Esophagus muscularis mucosa (tissue), 4 donors: ENCODE measurements at regions of chr4 and their contacts with region 1.

Region 1: DNA sequence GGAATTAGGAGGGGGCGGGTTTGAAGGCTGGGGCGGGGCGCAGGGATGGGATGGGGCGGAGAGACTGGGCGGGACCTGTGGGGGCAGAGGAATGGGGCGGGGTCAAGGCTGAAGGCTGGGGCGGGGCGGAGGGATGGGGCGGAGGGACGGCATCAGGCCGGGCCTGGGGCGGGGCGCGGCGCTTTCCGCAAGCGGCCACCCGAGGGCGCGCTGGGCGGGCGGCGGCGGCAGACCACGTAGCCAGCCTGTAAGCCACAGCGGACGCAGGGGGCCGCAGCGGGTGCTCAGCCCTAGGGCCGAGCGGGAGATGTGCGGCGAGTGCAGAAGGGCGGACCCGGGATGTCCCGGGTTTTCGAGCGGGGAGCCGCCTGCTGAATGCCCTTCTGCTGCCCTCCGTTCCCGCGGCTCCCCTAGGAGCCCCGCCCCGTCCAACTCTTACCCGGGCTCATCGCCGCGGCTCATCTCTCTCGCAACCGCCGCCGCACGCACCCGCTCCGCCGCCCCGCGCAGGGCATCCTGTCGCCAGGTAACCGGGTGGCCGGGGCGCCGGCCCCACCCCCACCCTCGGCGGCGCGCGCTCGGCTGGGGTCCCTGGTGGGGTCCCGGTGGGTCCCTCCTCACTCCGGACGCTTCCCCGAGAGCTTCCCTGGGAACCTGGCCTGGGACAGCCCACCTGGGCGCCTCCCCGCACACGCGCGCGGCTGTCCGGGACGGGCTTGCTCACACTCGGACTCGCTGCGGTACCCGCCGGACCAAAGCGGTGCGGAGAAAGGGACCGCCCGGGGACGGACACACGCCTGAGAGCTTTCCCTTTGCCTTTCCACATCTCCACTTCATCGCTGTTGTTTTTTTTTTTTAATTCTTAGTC is at the start of gene CCDC110:
- DNase-seq: peak; percentile 97
- H3K4me3 ChIP-seq: peak within 1 kb of the TSS; percentile 76 to 97 (median 91)
- H3K27ac ChIP-seq: peak within 1 kb of the TSS; percentile 84 to 86 (median 84)
- H3K4me1 ChIP-seq: peaks cover 9 to 20% (median 18%) of the 10 kb centered on the region in 4 donors
- H3K27me3 ChIP-seq: peaks cover 0 to 4% (median 0%) of the 10 kb centered on the region in 4 donors
- CTCF ChIP-seq: peak; percentile 75 to 86 (median 78)
- EP300 ChIP-seq: no peak
- POLR2A ChIP-seq: no peak
- total RNA-seq, gene CCDC110: 2.9 to 6.3 (median 4.4) TPM

Region 2: DNA sequence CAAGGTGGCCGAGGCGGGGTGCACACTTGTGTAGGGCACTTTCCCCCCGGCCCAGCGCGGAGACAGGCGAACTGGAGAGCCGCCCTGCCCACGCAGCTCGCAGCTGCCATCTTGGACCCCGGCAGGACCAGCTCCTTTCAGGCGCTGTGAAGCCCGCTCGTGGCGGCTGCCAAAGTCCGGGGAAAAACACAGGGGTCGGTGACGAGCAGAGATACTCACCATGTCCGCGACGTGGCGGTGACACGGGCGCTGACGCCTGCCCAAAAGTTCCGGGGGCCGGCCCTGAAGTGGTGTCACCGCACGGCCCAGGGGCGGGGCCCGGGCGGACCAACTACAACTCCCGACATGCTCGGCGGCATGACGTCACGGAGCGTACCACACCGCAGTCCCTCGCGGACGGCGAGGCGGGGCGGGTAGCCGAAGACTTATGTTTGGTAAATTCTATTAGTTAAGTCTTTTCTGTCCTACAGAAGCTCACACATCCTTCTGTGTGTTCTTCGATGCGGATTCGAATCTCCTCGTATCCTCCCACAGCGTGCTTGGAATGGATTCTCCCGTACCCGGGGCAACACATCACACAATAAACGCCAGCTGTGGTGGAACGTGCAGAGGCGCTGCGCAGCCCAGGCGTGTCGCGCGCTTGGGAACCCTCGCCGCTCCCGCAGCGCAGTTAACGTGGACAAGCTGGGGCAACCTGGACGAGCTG is 45.7 kb before region 1 on chr4 and contains the start of gene UFSP2:
- intact Hi-C with region 1: loop called (anchors 5 kb)
- DNase-seq: peak; percentile 98
- H3K4me3 ChIP-seq: peak within 1 kb of the TSS; percentile 83 to 89 (median 86)
- H3K27ac ChIP-seq: peak within 1 kb of the TSS; percentile 96 to 97 (median 96)
- H3K4me1 ChIP-seq: peaks cover 34 to 48% (median 46%) of the 10 kb centered on the region in 4 donors
- H3K27me3 ChIP-seq: no peaks in the 10 kb centered on the region
- CTCF ChIP-seq: peak in 1 of 3 experiments; percentile 16
- EP300 ChIP-seq: no peak
- POLR2A ChIP-seq: peak; percentile 56
- total RNA-seq, gene UFSP2: 36.7 to 49.0 (median 40.6) TPM

Region 3: DNA sequence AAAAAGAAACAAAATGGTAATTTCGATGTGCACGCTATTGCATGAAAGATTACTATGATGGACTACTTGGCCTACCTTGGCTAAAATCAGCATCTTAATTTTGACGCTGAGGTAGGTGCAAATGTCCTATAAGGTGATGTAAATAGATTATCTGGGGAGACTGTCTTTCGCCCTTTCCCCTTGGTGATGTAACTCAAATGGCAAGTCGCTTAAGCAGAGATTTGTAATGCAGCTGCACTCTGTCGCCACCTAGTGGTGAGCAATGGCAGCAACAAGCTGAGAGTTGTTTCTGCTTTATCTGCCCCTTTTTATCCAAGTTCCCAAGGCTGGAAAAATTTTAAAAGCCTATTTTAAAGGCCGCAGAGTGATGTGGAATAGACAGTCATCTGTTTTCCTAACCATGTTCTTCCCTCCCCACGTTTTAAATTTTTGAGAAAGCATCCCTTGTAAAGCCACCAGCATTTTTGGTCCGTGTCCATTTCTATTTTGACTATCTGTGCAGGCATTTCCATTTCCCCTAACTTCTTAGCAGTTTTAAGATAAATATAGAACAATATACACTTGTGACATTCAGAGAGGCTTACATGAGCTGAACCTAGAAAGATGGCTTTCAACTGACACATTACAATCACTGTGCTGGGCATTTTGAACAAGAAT is 126.2 kb after region 1 on chr4:
- intact Hi-C with region 1: loop called (anchors 1 kb)
- DNase-seq: peak; percentile 95
- H3K4me3 ChIP-seq: no peak overlapping the region
- H3K27ac ChIP-seq: peak overlapping the region; percentile 60 to 73 (median 68)
- H3K4me1 ChIP-seq: peaks cover 15 to 43% (median 38%) of the 10 kb centered on the region in 4 donors
- H3K27me3 ChIP-seq: no peaks in the 10 kb centered on the region
- CTCF ChIP-seq: peak; percentile 98 to 100 (median 99)
- EP300 ChIP-seq: no peak
- POLR2A ChIP-seq: no peak

Region 4: DNA sequence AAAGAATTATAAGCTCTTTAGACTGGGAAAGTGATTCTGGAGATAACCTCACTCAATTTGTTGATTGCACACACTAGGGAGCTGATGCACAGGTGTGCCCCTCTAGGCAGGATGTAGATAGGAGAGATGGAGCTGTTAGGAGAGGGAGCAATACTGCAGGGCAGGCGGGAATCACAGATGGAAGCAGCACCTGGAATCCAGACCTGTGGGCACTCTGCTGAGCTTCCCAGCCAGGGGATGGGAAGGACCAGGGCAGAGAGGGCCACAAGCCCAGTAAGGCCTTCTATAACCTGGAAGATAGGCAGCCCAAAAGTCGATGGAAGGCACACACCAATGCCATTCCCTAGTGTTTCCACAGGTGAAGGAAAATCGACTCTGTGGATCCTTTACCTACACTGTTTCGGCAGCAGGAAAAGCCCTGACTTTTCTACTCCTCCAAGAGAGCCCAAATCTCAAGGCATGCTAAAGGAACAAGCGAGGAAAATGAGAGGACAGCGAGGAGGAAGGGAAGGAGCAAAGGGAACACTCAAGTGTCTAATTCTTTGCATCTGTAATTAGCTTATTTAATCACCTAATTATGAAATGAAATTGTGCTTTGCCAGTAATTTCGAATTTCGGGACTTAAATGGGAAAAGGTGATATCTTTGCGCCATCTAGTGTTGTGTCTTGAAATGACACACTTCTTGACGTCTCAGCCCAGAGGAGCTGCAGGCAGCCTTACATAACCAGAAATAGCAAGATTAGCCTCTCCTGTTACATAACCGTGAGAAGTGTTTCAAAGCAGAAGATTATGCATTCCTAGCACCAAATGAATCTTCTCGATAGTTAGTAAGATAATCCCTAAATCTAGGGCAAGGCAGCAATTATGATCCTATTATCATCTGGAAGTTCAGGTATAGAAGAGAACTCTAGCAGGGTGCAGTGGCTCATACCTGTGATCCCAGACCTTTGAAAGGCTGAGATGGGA is 566.5 kb after region 1 on chr4:
- intact Hi-C with region 1: loop called (anchors 10 kb)
- DNase-seq: no peak
- H3K4me3 ChIP-seq: no peak overlapping the region
- H3K27ac ChIP-seq: peak overlapping the region; percentile 64 to 80 (median 68)
- H3K4me1 ChIP-seq: peaks cover 15 to 38% (median 36%) of the 10 kb centered on the region in 4 donors
- H3K27me3 ChIP-seq: no peaks in the 10 kb centered on the region
- CTCF ChIP-seq: peak; percentile 78 to 87 (median 86)
- EP300 ChIP-seq: no peak
- POLR2A ChIP-seq: no peak